ENCODE measurements at regions of chr3 and their contacts with region 1.

Region 1: DNA sequence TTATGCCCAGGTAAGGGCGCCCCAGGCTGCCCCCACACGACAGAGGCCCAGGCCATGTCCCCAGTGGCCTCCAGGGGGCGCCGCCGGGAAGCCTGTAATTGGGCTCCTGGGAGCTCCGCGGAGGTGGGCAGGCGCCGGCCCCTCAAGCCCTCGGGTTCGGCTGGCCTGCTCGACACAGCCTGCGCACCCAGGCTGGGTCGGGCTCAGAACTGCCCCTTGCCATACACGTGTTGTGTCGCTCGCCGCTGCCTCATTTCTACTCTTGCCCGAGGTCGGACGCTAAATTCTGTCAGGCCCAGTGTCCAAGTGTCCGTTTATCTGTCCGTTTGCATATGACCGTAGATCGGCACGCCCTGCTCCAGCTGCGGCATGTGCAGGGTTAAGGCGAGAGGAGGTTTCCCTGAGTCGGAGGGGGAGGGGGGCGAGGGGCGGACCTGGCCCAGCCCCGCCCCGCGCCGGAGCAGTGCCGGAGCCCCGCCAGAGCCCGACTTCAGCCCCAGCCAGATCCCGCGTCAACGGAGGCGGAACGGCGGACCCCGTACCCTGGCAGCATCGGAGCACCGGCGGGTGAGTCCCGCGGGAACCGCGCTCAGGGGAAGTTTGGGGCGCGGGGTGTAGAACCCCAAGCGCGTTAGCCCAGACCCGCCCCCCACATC is at the start of gene KLHDC8B:
- DNase-seq: peak; percentile 89
- H3K4me3 ChIP-seq: peak within 1 kb of the TSS; percentile 55 to 67 (median 62)
- H3K27ac ChIP-seq: peak within 1 kb of the TSS; percentile 66 to 88 (median 83)
- H3K4me1 ChIP-seq: peaks cover 8 to 42% (median 36%) of the 10 kb centered on the region in 4 donors
- H3K27me3 ChIP-seq: no peaks in the 10 kb centered on the region
- CTCF ChIP-seq: peak; percentile 95 to 97 (median 96)
- EP300 ChIP-seq: no peak
- POLR2A ChIP-seq: peak; percentile 50
- total RNA-seq, gene KLHDC8B: 4.5 to 23.5 (median 13.4) TPM

Region 2: GRCh38 chr3:49276475-49277382 is 105.5 kb after region 1 on chr3 and contains the start of gene C3orf62:
- in situ Hi-C with region 1: no loop called
- intact Hi-C with region 1: loop called (anchors 5 kb)
- DNase-seq: peak; percentile 92
- H3K4me3 ChIP-seq: peak within 1 kb of the TSS; percentile 39 to 51 (median 46)
- H3K27ac ChIP-seq: peak within 1 kb of the TSS; percentile 88 to 93 (median 92)
- H3K4me1 ChIP-seq: peaks cover 0 to 43% (median 27%) of the 10 kb centered on the region in 4 donors
- H3K27me3 ChIP-seq: no peaks in the 10 kb centered on the region
- CTCF ChIP-seq: no peak
- EP300 ChIP-seq: no peak
- POLR2A ChIP-seq: peak; percentile 52
- total RNA-seq, gene C3orf62: 2.4 to 13.5 (median 5.3) TPM

Region 3: GRCh38 chr3:49428697-49429100 is 257.5 kb after region 1 on chr3:
- in situ Hi-C with region 1: loop called in 2 of 4 experiments (anchors 25 kb)
- intact Hi-C with region 1: no loop called
- DNase-seq: no peak
- H3K4me3 ChIP-seq: peak overlapping the region; percentile 50 to 94 (median 60)
- H3K27ac ChIP-seq: peak overlapping the region; percentile 90 to 97 (median 93)
- H3K4me1 ChIP-seq: peaks cover 0 to 14% (median 8%) of the 10 kb centered on the region in 4 donors
- H3K27me3 ChIP-seq: no peaks in the 10 kb centered on the region
- CTCF ChIP-seq: no peak
- EP300 ChIP-seq: no peak
- POLR2A ChIP-seq: no peak

Region 4: DNA sequence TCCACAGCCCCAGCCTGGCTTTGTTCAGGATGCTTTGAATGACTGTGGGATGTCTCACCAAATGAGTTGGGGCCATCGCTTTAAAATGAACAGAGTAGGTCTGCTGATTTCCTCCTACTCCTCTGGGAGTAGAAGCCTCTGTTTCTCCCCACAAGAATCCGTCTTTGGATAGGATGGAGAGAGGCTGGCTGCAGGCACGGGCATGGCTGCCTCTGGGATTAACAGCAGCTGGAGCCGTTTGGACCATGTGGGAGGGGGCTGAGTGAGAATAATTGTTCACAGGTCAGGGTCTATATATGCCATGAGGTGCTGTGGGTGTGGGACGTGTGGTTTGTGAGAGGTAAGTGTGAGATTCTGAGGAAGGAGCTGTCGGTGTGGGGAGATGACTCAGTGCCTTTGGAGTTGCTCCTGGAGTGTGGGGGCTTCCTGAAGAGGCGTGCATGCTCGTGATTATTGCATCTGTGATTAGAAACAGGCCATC is 454.9 kb after region 1 on chr3:
- in situ Hi-C with region 1: no loop called
- intact Hi-C with region 1: no loop called
- DNase-seq: no peak
- H3K4me3 ChIP-seq: no peak overlapping the region
- H3K27ac ChIP-seq: no peak overlapping the region
- H3K4me1 ChIP-seq: no peaks in the 10 kb centered on the region
- H3K27me3 ChIP-seq: no peaks in the 10 kb centered on the region
- CTCF ChIP-seq: no peak
- EP300 ChIP-seq: no peak
- POLR2A ChIP-seq: no peak